ENCODE measurements at regions of chr7 and their contacts with region 1.

Region 1: DNA sequence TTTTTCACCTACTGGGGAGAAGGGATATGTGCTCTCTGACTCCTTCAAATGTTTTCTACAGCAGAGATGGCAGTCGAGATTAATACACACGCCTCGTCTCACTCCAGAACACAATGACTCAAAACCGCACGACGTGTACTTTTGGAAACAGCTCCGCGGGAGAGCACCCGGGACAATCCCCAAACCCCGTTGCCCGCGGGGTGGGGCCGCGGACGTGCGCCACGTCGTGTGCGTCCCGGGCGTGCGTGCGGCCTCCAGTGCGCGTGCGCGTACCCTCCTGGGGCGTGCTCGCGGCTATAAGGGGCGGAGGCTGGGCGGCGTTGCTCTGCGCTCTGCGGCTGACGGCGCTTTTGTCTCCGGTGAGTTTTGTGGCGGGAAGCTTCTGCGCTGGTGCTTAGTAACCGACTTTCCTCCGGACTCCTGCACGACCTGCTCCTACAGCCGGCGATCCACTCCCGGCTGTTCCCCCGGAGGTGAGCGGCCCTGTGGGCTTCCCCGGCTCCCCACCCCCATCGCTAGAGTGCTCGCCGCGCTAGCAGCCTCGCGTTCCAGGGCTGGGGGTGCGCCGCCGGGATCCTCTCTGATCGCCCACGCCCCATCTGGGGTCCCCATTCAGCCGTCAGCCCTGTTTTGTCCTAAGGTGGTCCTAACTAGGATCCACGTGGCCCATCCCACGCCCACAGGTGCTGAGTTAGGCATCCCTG is at the start of gene HILPDA:
- DNase-seq: peak; percentile 77 to 94 (median 87)
- H3K4me3 ChIP-seq: peak within 1 kb of the TSS; percentile 63 to 98 (median 88)
- H3K27ac ChIP-seq: peak within 1 kb of the TSS; percentile 41 to 98 (median 90)
- H3K27me3 ChIP-seq: no peaks in the 10 kb centered on the region
- CTCF ChIP-seq: peak in 38 of 56 donors; percentile 4 to 68 (median 40)
- total RNA-seq, gene HILPDA: 8.6 to 287 (median 24.8) TPM

Region 2: DNA sequence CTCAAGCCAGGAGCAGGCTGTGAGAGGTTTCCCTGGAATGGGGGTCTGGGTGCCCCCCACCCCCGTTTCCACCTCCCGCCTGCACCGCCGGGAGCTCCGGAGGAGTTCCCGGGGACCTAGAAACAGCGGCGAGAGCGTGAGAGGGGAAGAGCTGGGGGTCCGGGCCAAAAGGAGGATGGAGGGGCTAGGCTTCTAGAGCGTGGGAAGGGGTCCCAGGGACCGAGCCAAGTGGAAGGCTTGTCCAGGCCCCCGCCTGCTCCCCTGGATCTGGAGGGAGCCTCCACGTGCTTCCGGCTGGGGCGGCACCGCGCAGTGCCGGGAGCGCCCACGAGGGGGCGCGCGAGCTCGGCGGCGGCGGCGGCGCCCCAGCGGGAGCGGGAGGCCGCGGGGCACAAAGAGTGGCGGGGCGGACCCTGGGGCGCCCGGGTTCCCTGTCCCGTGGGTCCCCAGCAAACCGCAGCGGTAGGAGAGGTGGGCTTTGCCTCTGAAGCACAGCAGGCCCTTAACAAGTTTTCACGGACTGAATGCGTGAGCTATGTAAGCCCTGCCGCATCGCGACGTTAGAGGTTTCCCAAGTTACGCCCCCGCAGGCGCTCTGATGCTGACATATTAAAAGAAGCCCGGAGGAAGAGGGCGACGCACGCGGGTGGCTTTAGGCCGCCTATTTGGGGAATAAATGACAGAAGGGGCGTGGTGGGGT is 320.0 kb before region 1 on chr7:
- intact Hi-C with region 1: no loop called
- DNase-seq: peak in 7 of 10 donors; percentile 45 to 83 (median 55)
- H3K4me3 ChIP-seq: peak overlapping the region; percentile 45 to 81 (median 69)
- H3K27ac ChIP-seq: peak overlapping the region in 13 of 59 donors; percentile 1 to 74 (median 33)
- H3K27me3 ChIP-seq: peaks cover 0 to 4% (median 0%) of the 10 kb centered on the region in 45 donors
- CTCF ChIP-seq: peak; percentile 50 to 99 (median 88)

Region 3: GRCh38 chr7:128347647-128348097 is 108.0 kb before region 1 on chr7:
- intact Hi-C with region 1: loop called in 1 of 2 experiments (anchors 5 kb)
- DNase-seq: peak in 8 of 10 donors; percentile 22 to 76 (median 64)
- H3K4me3 ChIP-seq: no peak overlapping the region
- H3K27ac ChIP-seq: peak overlapping the region in 7 of 59 donors; percentile 2 to 66 (median 28)
- H3K27me3 ChIP-seq: peaks cover 0 to 17% (median 0%) of the 10 kb centered on the region in 45 donors
- CTCF ChIP-seq: peak; percentile 44 to 82 (median 69)

Region 4: GRCh38 chr7:128398016-128398840 is 57.5 kb before region 1 on chr7:
- intact Hi-C with region 1: loop called (anchors 2 to 10 kb)
- DNase-seq: peak in 8 of 10 donors; percentile 62 to 75 (median 70)
- H3K4me3 ChIP-seq: no peak overlapping the region
- H3K27ac ChIP-seq: no peak overlapping the region
- H3K27me3 ChIP-seq: no peaks in the 10 kb centered on the region
- CTCF ChIP-seq: peak; percentile 65 to 97 (median 92)

Region 5: DNA sequence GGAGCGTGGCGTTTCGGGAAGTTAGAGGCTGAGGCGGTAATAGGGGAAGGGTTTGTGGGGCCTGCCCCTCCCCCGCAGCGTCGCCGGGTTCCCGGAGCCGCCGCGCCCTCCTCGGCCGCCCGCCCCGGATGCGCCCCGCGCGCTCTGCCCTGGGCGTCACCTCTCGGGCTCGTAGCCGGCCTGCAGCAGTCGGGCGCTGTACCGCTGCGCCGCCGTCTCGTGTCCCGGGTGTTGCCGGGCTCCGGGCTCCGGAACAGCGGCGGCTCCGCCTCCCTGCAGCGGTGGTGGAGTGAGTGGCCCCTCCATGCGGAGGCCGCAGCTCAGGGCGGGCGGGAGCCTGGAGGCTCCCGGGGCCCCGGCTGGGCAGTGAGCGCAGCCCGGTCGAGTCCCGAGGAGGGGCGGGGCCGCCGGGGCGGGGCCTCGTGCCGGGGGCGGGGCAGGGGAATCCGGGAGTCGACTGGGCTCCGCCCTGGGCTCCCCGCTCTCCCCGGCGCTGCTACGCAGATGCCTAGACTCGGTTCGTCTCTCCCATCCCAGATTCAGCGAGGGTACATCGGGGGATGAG is 46.0 kb before region 1 on chr7 and contains the start of gene IMPDH1:
- intact Hi-C with region 1: loop called in 1 of 2 experiments (anchors 10 kb)
- DNase-seq: peak; percentile 67 to 93 (median 78)
- H3K4me3 ChIP-seq: peak within 1 kb of the TSS; percentile 43 to 90 (median 72)
- H3K27ac ChIP-seq: peak within 1 kb of the TSS in 57 of 59 donors; percentile 11 to 89 (median 76)
- H3K27me3 ChIP-seq: no peaks in the 10 kb centered on the region
- CTCF ChIP-seq: peak in 15 of 56 donors; percentile 8 to 52 (median 17)
- total RNA-seq, gene IMPDH1: 18.1 to 58.7 (median 39.5) TPM

Region 6: GRCh38 chr7:128425850-128426249 is 29.9 kb before region 1 on chr7:
- intact Hi-C with region 1: loop called (anchors 1 to 2 kb)
- DNase-seq: peak in 8 of 10 donors; percentile 28 to 85 (median 72)
- H3K4me3 ChIP-seq: no peak overlapping the region
- H3K27ac ChIP-seq: no peak overlapping the region
- H3K27me3 ChIP-seq: no peaks in the 10 kb centered on the region
- CTCF ChIP-seq: peak; percentile 64 to 96 (median 90)

Region 7: GRCh38 chr7:128530855-128531104 is 75.1 kb after region 1 on chr7:
- intact Hi-C with region 1: loop called in 1 of 2 experiments (anchors 10 kb)
- DNase-seq: peak in 1 of 10 donors; percentile 32
- H3K4me3 ChIP-seq: peak overlapping the region; percentile 29 to 86 (median 74)
- H3K27ac ChIP-seq: peak overlapping the region in 57 of 59 donors; percentile 65 to 99 (median 95)
- H3K27me3 ChIP-seq: no peaks in the 10 kb centered on the region
- CTCF ChIP-seq: no peak

Region 8: GRCh38 chr7:129438839-129439651 is 983.3 kb after region 1 on chr7:
- intact Hi-C with region 1: no loop called
- DNase-seq: no peak
- H3K4me3 ChIP-seq: no peak overlapping the region
- H3K27ac ChIP-seq: no peak overlapping the region
- H3K27me3 ChIP-seq: no peaks in the 10 kb centered on the region
- CTCF ChIP-seq: no peak